ENCODE measurements at regions of chr14 and their contacts with region 1.

Region 1: DNA sequence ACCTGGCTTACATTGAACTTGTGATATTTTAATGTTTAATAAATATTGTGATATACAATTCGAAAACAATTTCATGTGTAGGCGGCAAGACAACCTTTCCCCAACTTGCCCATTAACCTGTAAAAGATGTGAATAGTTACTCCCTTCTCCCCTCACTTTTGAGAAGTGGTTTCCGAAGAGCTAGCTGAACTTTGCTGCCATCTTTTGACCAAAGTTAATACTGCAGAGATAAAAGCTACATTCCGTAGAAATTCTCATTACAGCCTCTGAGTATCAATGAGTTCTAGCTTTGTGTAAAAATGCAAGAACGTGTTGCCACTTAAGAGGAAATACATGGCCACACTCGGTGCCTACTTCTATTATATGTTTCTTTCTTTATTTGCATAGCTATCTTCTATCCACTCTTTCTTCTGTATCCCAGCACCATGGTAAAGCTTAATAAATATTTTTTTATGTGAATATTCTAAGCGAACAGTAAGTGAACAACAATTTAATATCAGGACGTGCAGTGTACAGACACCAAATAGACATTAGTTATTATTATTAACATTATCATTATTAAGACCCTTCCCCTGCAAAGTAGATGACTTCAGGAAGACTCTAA is 105.1 kb upstream of the TMEM260 start:
- DNase-seq: no peak
- H3K4me3 Mint-ChIP-seq: no peak overlapping the region
- H3K27ac Mint-ChIP-seq: no peak overlapping the region
- H3K4me1 Mint-ChIP-seq: no peaks in the 10 kb centered on the region
- H3K27me3 Mint-ChIP-seq: peaks cover 15% of the 10 kb centered on the region

Region 2: DNA sequence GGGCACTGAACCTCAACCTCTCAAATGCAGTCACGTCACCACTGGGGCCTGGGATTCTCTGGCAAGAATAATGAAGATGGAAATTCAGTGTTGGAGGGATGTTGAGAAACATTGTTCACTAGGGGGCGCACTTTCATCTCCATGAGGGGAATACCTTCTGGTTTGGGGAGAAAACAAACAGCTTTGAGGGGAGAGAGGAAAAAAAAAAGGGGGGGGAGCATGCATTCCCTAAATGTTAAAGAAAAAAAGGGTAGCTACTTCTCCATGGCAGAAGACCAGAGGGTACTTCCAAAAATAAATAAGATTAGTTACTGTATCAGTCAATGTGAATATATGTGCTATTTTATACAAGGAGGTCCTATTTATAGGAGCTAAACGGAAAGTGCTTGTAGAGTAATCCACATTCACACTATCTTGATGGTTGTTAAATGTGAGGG is 1028.3 kb before region 1 on chr14:
- intact Hi-C with region 1: loop called (anchors 5 kb)
- DNase-seq: peak; percentile 22
- H3K4me3 Mint-ChIP-seq: no peak overlapping the region
- H3K27ac Mint-ChIP-seq: no peak overlapping the region
- H3K4me1 Mint-ChIP-seq: peaks cover 23% of the 10 kb centered on the region
- H3K27me3 Mint-ChIP-seq: no peaks in the 10 kb centered on the region

Region 3: DNA sequence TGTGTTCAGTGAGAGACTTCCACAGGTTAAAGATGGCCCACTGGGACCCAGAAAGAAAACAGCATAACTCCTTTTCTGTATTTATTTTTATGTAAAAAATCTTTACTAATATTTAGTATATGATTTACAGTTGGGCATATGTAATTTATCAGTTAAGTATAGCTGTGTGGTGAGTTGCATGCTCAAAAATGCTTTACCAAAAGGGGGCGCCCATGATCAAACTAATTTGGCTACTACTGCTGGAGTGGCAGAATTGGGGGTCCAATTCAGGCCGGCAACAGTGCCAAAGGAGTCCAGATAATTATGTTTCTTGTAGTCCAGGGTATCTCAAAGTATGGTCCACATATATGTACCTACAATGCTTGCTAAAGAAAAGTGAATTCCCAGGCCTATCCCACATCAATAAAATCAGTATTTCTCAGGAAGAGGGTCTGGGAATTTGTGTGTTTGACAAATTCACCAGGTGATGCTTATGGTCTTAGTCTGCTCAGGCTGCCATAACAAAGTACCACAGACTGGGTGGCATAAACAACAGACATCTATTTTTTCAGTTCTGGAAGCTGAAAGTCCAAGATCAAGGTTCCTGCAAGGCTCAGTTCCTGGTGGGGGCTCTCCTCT is 742.5 kb before region 1 on chr14:
- intact Hi-C with region 1: loop called (anchors 10 kb)
- DNase-seq: peak; percentile 20
- H3K4me3 Mint-ChIP-seq: no peak overlapping the region
- H3K27ac Mint-ChIP-seq: no peak overlapping the region
- H3K4me1 Mint-ChIP-seq: no peaks in the 10 kb centered on the region
- H3K27me3 Mint-ChIP-seq: peaks cover 8% of the 10 kb centered on the region

Region 4: GRCh38 chr14:55864890-55865655 is 609.4 kb before region 1 on chr14:
- intact Hi-C with region 1: loop called (anchors 10 kb)
- DNase-seq: no peak
- H3K4me3 Mint-ChIP-seq: no peak overlapping the region
- H3K27ac Mint-ChIP-seq: no peak overlapping the region
- H3K4me1 Mint-ChIP-seq: peaks cover 10% of the 10 kb centered on the region
- H3K27me3 Mint-ChIP-seq: peaks cover 13% of the 10 kb centered on the region

Region 5: GRCh38 chr14:56630707-56631106 is 156.2 kb after region 1 on chr14:
- intact Hi-C with region 1: no loop called
- DNase-seq: no peak
- H3K4me3 Mint-ChIP-seq: no peak overlapping the region
- H3K27ac Mint-ChIP-seq: no peak overlapping the region
- H3K4me1 Mint-ChIP-seq: no peaks in the 10 kb centered on the region
- H3K27me3 Mint-ChIP-seq: no peaks in the 10 kb centered on the region

Measured in activated T-helper 2 cell treated with anti-CD3 and anti-CD28 coated beads, Interferon-gamma antibody, Interleukin-2, Interleukin-4, amounts not matched to agents 10 μg/mL and 5 μg/mL and 100 μg/mL, durations not matched to agents 14 hours and 24 hours and 36 hours (primary cell).